ENCODE measurements at regions of chr2 and their contacts with region 1.

Region 1: DNA sequence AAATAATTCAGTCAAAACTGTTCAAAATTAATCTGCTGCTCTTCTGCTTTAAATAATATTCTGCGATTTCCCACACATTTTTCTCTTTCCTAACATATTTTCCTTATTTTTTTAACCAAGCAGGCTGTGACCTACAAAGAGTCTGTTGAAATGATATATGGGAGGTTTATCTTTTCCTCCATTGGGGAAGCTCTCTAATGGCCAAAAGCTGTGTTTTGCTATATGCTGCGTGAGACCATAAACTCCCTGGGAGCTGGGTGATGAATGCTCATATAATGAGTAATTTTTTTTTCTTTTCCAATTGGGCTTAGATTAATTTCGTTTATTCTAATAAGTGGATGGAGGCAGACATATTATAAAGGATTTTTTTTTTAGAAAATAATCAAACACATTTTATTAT is 72.2 kb upstream of the MAP2 start:
- DNase-seq: no peak
- ATAC-seq: no peak
- H3K4me3 ChIP-seq: no peak overlapping the region
- H3K4me3 Mint-ChIP-seq: no peak overlapping the region
- H3K27ac ChIP-seq: no peak overlapping the region
- H3K27ac Mint-ChIP-seq: no peak overlapping the region
- H3K4me1 ChIP-seq: no peaks in the 10 kb centered on the region
- H3K4me1 Mint-ChIP-seq: no peaks in the 10 kb centered on the region
- H3K27me3 ChIP-seq: no peaks in the 10 kb centered on the region
- H3K27me3 Mint-ChIP-seq: no peaks in the 10 kb centered on the region
- CTCF ChIP-seq: no peak

Region 2: DNA sequence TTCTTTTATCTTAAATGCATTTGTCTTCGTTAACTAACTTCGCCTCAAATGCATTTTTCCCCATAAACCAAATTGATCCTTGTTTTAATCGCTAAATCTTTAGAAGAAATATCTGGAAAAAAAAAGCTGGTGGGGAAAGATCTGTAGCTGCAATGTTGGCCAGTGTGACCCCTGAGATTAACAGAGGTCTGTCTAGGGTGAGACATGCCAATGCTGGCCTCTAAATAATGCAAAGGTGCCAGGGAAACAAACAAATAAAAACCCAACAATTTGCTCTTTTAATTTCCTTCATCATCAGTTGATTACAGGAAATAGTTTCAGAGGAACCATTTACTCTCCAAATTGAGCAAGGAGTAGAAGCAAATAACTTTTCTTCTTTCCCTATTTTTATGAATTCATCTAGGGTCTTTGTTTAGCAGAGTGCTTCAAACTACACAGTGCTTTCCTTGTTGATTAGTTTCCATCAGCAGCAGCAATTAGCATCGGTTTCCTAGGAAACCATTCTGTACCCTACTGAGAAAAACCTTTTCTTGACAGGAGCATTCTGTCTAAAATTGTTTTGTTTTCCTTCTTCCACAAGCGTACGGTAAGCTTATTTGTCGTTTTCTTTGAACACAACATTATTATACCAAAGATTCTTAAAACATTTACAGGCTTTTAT is 319.5 kb after region 1 on chr2:
- intact Hi-C with region 1: loop called (anchors 10 kb)
- DNase-seq: no peak
- ATAC-seq: no peak
- H3K4me3 ChIP-seq: no peak overlapping the region
- H3K4me3 Mint-ChIP-seq: no peak overlapping the region
- H3K27ac ChIP-seq: no peak overlapping the region
- H3K27ac Mint-ChIP-seq: no peak overlapping the region
- H3K4me1 ChIP-seq: no peaks in the 10 kb centered on the region
- H3K4me1 Mint-ChIP-seq: no peaks in the 10 kb centered on the region
- H3K27me3 ChIP-seq: no peaks in the 10 kb centered on the region
- H3K27me3 Mint-ChIP-seq: no peaks in the 10 kb centered on the region
- CTCF ChIP-seq: no peak

Region 3: DNA sequence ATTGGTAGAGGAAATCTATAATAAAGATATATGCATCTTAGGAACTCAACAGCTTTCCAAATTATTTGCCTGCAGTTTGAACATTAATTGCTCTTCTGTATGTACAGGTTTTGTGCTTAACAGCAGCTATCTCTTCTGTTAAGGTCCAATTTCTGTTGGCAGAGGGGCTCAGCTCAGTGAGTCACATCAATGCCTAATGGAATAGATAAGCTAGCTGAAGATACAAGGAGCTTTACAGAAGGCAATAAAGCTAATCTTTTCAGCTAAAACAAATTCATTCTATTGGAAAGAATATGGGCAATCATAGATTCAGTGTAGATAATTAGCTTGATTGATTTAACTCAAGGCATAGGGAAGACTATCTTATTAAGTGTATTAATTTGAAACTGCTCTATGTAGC is 361.6 kb after region 1 on chr2:
- intact Hi-C with region 1: no loop called
- DNase-seq: no peak
- ATAC-seq: no peak
- H3K4me3 ChIP-seq: no peak overlapping the region
- H3K4me3 Mint-ChIP-seq: no peak overlapping the region
- H3K27ac ChIP-seq: no peak overlapping the region
- H3K27ac Mint-ChIP-seq: no peak overlapping the region
- H3K4me1 ChIP-seq: no peaks in the 10 kb centered on the region
- H3K4me1 Mint-ChIP-seq: no peaks in the 10 kb centered on the region
- H3K27me3 ChIP-seq: no peaks in the 10 kb centered on the region
- H3K27me3 Mint-ChIP-seq: no peaks in the 10 kb centered on the region
- CTCF ChIP-seq: no peak

Measured in natural killer cell (primary cell).